ENCODE measurements at regions of chr1 and their contacts with region 1.

Region 1: GRCh38 chr1:147599362-147600118 is 58.2 kb downstream of the BCL9 start:
- DNase-seq: peak; percentile 97
- H3K4me3 Mint-ChIP-seq: peak overlapping the region; percentile 99
- H3K27ac Mint-ChIP-seq: peak overlapping the region; percentile 86
- H3K4me1 Mint-ChIP-seq: peaks cover 31% of the 10 kb centered on the region
- H3K27me3 Mint-ChIP-seq: peaks cover 12% of the 10 kb centered on the region

Region 2: DNA sequence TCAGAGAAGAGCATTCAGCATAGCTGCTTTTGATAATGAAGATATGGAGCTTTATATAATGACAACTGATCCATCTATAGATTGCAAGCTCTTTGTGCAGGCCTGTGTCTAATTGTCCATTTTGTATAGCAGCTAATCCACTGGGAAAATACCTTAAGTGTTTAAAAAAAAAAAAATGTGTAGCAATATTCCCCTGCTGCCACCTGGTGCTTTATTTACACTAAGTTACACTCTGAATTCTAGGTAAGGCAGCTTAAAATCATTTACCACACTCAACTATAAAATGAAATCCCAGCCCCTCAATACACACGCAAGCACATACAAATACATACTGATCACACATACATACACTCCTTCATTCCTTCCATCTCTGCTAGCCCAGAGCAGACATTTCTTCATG is 107.3 kb before region 1 on chr1:
- intact Hi-C with region 1: no loop called
- DNase-seq: no peak
- H3K4me3 Mint-ChIP-seq: no peak overlapping the region
- H3K27ac Mint-ChIP-seq: no peak overlapping the region
- H3K4me1 Mint-ChIP-seq: peaks cover 5% of the 10 kb centered on the region
- H3K27me3 Mint-ChIP-seq: peaks cover 12% of the 10 kb centered on the region

Region 3: GRCh38 chr1:147527941-147528936 is 71.3 kb before region 1 on chr1:
- intact Hi-C with region 1: no loop called
- DNase-seq: peak; percentile 74
- H3K4me3 Mint-ChIP-seq: no peak overlapping the region
- H3K27ac Mint-ChIP-seq: no peak overlapping the region
- H3K4me1 Mint-ChIP-seq: peaks cover 5% of the 10 kb centered on the region
- H3K27me3 Mint-ChIP-seq: no peaks in the 10 kb centered on the region

Region 4: GRCh38 chr1:147539112-147539575 is 60.4 kb before region 1 on chr1:
- intact Hi-C with region 1: loop called (anchors 1 kb)
- DNase-seq: no peak
- H3K4me3 Mint-ChIP-seq: no peak overlapping the region
- H3K27ac Mint-ChIP-seq: no peak overlapping the region
- H3K4me1 Mint-ChIP-seq: peaks cover 29% of the 10 kb centered on the region
- H3K27me3 Mint-ChIP-seq: peaks cover 5% of the 10 kb centered on the region

Region 5: DNA sequence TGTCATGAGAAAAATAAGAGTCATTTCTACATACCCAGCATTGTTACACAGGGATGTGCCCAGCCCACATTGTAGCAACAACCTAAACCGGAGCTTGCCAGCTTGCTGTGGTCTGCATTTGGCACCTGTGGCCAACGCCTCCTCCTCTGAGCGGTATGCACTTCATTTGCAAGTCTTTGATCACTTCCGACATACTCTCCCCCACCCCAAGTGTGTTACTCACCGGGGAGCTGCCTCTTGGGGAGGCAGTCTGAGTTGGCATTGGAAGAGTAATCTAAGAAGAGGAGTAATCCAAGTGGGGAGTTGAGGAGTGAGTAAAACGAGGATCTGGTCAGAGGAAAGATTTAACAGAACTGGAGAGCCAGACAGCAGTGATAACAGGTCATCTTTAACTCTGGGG is 54.4 kb before region 1 on chr1:
- intact Hi-C with region 1: loop called (anchors 1 kb)
- DNase-seq: peak; percentile 90
- H3K4me3 Mint-ChIP-seq: peak overlapping the region; percentile 77
- H3K27ac Mint-ChIP-seq: peak overlapping the region; percentile 84
- H3K4me1 Mint-ChIP-seq: peaks cover 51% of the 10 kb centered on the region
- H3K27me3 Mint-ChIP-seq: no peaks in the 10 kb centered on the region

Region 6: DNA sequence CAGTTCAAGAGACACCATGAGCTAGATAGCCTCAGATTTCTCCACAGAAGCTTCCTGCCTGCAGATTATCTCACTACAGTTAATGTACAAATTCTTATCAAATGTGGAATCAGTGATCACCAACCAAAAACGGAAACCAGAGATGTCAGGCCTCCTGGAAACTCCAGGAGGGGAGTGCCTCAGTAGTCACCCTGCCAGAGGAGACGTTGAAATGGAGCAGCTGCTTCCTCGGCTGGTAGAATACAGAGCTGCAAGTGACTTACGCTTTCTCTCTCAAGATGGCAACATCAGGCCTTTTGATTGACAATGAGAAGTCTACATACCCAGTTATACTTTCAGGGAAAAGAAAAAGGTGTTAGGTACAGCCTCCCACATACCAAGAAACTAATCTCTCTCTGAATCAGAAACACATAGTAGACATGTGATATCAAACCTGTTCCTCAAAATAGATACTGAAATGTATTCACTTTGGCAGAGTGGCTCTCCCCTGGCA is 18.6 kb after region 1 on chr1:
- intact Hi-C with region 1: loop called (anchors 1 kb)
- DNase-seq: peak; percentile 87
- H3K4me3 Mint-ChIP-seq: peak overlapping the region; percentile 47
- H3K27ac Mint-ChIP-seq: peak overlapping the region; percentile 61
- H3K4me1 Mint-ChIP-seq: peaks cover 33% of the 10 kb centered on the region
- H3K27me3 Mint-ChIP-seq: no peaks in the 10 kb centered on the region

Region 7: GRCh38 chr1:147647796-147648633 is 48.5 kb after region 1 on chr1:
- intact Hi-C with region 1: loop called (anchors 2 kb)
- DNase-seq: peak; percentile 86
- H3K4me3 Mint-ChIP-seq: peak overlapping the region; percentile 67
- H3K27ac Mint-ChIP-seq: peak overlapping the region; percentile 83
- H3K4me1 Mint-ChIP-seq: peaks cover 50% of the 10 kb centered on the region
- H3K27me3 Mint-ChIP-seq: no peaks in the 10 kb centered on the region

Region 8: DNA sequence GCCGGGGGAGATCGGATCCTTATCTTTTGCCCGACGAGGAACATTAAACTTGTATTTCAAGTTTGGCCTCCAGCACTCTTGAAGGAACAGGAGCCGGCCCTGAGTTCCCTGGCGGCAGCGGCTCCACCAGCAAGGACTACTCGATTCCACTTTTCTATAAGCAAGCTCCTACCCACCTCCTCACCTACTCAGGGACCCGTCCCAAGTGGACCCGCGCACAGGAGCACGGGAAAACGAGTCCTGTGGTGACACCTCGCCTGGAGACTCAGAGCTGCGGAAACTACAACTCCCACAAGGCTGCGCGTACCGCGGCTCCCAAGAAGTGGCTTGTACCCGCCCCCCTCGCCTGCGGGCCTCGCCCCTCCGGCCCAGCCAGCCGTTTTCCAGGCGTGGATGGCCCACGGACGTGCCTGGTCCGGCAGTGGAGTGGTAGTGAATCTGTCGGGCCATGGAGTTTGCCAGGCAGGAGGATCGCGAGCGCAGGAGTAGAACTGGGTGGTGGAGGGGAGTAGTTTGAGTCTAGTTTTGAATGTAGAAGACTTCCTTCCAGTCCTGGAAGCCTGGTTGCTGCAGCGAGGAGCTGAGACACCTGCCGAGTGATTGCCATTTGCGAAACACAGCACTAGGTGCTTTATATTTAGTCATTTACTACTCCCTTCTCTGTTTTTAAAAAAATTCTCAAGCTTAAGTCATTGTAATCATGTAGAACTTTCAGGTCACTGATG is 70.9 kb after region 1 on chr1 and contains the start of gene ACP6:
- intact Hi-C with region 1: loop called (anchors 5 kb)
- DNase-seq: peak; percentile 97
- H3K4me3 Mint-ChIP-seq: peak within 1 kb of the TSS; percentile 94
- H3K27ac Mint-ChIP-seq: peak within 1 kb of the TSS; percentile 93
- H3K4me1 Mint-ChIP-seq: peaks cover 26% of the 10 kb centered on the region
- H3K27me3 Mint-ChIP-seq: peaks cover 23% of the 10 kb centered on the region
- total RNA-seq, gene ACP6: 9.5 and 15.3 TPM in 2 replicates